HEK293 (cell line): ENCODE measurements at regions of chr18 and their contacts with region 1.

Region 1: GRCh38 chr18:9638904-9639303 is 24.5 kb upstream of the PPP4R1 start:
- H3K4me3 ChIP-seq: no peak overlapping the region
- H3K27ac ChIP-seq: no peak overlapping the region
- H3K4me1 ChIP-seq: peaks cover 4% of the 10 kb centered on the region; the same call in 1 of the 2 replicates
- CTCF ChIP-seq: no peak

Region 2: DNA sequence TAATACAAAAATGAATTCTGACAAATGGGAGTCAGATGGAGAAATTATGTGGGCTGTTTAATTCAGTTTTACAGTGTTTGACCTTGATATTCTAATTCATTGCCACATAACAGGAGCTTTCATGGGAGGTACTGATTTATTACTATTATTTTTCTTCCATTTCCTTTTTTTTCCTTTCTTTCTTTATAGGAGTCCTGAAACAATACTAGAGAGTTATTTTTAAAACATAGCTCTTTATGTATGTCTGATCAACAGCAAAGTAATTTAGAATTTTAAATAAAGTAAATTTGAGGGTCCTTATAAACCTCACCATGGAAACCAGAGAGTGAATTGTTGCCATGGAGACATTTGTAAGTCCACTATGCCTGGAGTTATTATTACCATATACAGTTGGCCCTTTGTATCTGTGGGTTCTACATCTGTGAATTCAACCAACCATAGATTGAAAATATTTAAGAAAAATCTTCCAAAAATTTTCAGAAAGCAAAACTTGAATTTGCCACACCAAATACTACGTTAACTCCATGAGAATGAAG is 16.4 kb after region 1 on chr18:
- CTCF ChIA-PET with region 1: interaction called, 11 read pairs
- POLR2A ChIA-PET with region 1: no interaction called
- H3K4me3 ChIP-seq: no peak overlapping the region
- H3K27ac ChIP-seq: no peak overlapping the region
- H3K4me1 ChIP-seq: no peaks in the 10 kb centered on the region
- CTCF ChIP-seq: no peak

Region 3: GRCh38 chr18:9971313-9971920 is 332.5 kb after region 1 on chr18:
- CTCF ChIA-PET with region 1: no interaction called
- POLR2A ChIA-PET with region 1: no interaction called
- H3K4me3 ChIP-seq: no peak overlapping the region
- H3K27ac ChIP-seq: no peak overlapping the region
- H3K4me1 ChIP-seq: no peaks in the 10 kb centered on the region
- CTCF ChIP-seq: peak; percentile 73